H1 (cell line): ENCODE measurements at regions of chr5 and their contacts with region 1.

Region 1: DNA sequence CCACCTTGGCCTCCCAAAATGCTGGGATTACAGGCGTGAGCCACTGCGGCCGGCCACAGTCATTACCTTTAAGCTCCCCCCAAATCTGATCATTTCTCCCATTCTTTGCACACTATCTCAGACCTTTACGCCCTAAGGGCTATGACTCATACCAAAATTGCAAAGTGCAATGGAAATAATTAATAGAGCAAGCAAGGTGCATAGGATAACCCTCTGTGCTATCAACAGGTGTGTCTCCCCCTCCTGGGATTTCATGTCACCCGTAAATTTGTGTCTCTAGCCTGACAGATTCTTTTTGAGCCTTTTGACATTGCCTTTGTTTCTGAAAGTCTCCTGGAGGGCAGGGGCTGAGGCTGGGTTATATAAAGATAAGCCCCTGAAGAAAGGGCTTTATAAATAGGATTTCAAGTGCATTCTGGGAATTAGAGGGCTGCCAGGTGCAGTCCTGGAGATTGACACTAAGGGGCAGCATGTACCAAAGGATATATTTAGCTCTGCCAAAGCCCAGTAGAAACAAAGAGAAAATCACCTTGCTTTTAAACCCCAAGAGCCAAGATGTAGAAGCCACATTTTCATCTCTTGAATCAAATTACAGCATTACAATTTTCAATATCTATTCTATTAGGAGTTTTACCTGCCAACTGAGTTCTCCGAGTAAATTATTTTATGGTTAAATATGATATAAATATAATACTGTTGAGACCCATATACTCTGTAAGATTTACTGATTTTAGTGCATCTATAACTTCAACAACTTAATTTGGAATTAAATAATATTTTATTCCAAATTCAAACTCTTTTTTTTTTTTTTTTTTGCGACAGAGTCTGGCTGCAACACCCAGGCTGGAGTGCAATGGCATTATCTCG is 18.2 kb downstream of the S100Z start:
- DNase-seq: peak; percentile 47 to 86
- H3K4me3 ChIP-seq: no peak overlapping the region
- H3K27ac ChIP-seq: no peak overlapping the region
- H3K4me1 ChIP-seq: peaks cover 0 to 4% (median 0%) of the 10 kb centered on the region in 4 experiments; a peak in 2 of 7 replicates
- H3K27me3 ChIP-seq: no peaks in the 10 kb centered on the region
- CTCF ChIP-seq: peak in 2 of 3 experiments; percentile 76 to 80; a peak in 3 of 4 replicates
- EP300 ChIP-seq: no peak
- POLR2A ChIP-seq: no peak
- RAD21 ChIP-seq: peak; percentile 97 to 99

Region 2: DNA sequence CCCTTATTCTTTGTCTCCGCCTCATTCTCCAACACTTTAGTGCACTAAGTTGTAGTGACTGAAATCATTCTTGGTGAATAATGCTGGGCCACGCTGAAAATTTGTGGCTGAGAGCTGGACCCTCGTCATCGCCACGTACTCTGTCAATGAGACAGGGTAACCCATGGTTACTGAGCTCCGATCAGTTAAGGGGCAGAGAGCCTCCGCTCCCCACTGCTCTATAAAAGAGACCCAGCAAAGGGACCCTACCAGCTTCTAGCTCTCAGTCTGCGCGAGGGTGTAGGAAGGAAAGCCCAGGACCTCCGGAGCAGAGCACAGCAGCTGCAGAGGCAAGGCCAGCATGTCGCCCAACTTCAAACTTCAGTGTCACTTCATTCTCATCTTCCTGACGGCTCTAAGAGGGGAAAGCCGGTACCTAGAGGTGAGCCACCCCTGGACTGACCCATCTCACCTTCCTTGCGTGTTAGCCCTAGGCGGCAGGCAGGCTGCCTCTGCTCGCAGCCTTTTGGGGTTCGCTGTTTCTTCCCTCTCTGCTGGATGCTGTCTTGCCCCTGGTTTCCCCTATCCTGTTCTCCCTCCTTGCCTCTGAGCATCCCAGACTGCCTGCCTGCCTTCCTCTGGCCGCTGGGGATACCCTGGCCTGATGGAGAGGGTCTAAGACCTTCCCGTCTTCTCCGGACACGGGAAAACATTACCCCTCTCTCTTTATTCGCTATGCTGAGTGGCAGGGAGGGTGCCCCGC is 84.9 kb after region 1 on chr5 and contains the start of gene CRHBP:
- CTCF ChIA-PET with region 1: interaction called, 16 read pairs
- POLR2A ChIA-PET with region 1: no interaction called
- DNase-seq: peak in 1 of 2 experiments; percentile 63
- H3K4me3 ChIP-seq: peak within 1 kb of the TSS; percentile 49 to 71 (median 66)
- H3K27ac ChIP-seq: no peak within 1 kb of the TSS
- H3K4me1 ChIP-seq: peaks cover 0 to 4% (median 0%) of the 10 kb centered on the region in 4 experiments; a peak in 3 of 7 replicates
- H3K27me3 ChIP-seq: peaks cover 18 to 48% (median 35%) of the 10 kb centered on the region in 4 experiments
- CTCF ChIP-seq: peak in 2 of 3 experiments; percentile 4 to 26; a peak in 2 of 4 replicates
- EP300 ChIP-seq: no peak
- POLR2A ChIP-seq: no peak
- RAD21 ChIP-seq: no peak
- total RNA-seq, gene CRHBP: not detected in 2 replicates